Posterior cingulate gyrus (tissue), 11 donors: ENCODE measurements at regions of chr2 and their contacts with region 1.

Region 1: DNA sequence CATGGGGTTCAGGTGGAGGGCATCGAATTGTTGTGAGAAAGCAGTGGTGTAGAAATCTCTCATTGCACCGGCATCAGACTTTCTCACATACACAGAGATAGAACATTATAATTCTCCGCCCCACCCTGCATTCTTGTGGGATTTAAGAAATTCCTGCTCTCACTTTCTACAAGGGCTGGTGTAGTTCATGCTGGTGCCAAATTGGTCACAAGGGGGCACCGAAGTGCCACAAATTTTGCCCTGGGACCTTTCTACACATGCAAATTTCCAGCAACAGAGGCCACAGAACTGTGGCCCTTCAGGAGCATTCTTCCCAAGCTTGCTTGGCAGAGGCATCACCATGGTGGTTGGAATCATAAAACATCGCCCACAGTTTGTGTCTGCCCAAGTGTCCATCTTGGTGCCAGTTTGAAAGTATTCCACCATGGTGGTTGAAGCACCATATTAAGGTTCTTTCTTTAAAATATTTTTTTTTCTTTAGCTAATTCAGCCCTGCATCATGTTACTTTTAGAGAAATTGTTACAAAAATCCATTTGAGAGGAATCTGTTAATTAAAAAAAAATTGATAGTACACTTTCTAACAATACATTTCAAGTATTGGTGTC is 521.2 kb upstream of the FANCL start:
- DNase-seq: peak in 8 of 10 donors; percentile 14 to 92 (median 46)

Region 2: GRCh38 chr2:58120626-58121229 is 641.6 kb before region 1 on chr2:
- intact Hi-C with region 1: no loop called
- DNase-seq: no peak

Region 3: GRCh38 chr2:59182249-59182648 is 420.0 kb after region 1 on chr2:
- intact Hi-C with region 1: loop called (anchors 5 kb)
- DNase-seq: peak in 3 of 10 donors; percentile 8 to 31 (median 21)

Region 4: GRCh38 chr2:60550178-60550983 is 1788.1 kb after region 1 on chr2:
- intact Hi-C with region 1: loop called (anchors 10 kb)
- DNase-seq: peak in 7 of 10 donors; percentile 62 to 94 (median 74)

Region 5: DNA sequence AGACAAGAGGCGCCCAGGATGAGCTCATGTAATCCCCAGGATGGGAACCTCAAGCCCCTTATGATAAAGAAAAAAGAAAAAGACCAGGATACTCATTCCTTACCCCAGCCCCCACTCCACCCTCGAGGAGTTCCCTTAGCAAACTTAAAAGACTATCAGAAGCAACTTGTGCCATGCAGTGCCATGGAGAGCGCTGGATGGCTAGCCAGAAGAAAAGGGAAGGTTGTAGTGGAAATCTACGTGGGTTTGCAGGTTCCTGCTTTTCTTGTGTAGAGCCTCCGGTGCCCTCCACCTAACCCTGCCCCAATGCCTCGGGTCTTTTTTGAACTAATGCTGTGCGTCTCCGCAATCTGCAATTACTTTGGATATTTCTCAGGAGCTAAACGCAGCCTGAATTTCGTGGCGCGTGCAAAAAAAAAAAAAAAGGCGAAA is 1807.4 kb after region 1 on chr2:
- intact Hi-C with region 1: loop called (anchors 10 kb)
- DNase-seq: peak in 2 of 10 donors; percentile 14 to 54

Region 6: GRCh38 chr2:60674524-60675165 is 1912.4 kb after region 1 on chr2:
- intact Hi-C with region 1: loop called (anchors 10 kb)
- DNase-seq: peak; percentile 76 to 98 (median 90)